Activated T-helper 1 cell treated with anti-CD3 and anti-CD28 coated beads, Interleukin-12 subunit alpha, Interleukin-12 subunit beta, Interleukin-2, Interleukin-4 antibody, amounts not matched to agents 30 ng/mL and 10 ng/mL and 1 ng/mL, durations not matched to agents 14 hours and 24 hours and 36 hours (primary cell): ENCODE measurements at regions of chr11 and their contacts with region 1.

Region 1: DNA sequence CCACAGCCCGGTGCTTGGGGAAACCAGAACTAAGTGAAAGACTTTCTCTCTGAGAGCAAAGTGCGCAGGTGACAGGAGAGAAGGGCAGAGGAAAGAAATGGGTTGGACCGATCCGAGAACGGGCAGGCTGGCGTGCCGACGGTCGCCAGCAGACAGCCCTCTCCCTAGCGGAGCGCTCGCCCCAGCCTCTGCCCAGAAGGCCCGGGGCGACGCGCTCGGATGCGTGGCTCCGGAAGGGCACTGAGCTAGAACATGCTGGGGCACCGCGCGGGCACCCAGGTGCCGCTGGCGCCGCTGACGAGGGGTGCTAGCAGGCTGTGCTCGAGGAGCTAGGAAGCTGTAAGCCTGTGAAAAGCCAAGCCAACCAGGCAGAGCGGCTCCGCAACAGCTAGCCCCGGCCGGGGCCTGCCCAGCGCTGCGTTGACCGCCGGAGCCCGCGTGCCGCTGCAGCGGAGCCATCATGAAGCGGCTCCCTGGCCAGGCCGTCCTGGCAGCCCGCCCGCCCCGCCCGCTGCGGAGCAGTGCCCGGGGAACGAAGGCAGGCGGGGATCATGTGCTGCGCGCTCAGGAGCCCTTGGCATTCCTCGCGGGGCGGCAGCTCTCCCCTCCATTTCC is 22.1 kb upstream of the RRAS2 start:
- DNase-seq: peak; percentile 21
- H3K4me3 Mint-ChIP-seq: peak overlapping the region; percentile 74
- H3K27ac Mint-ChIP-seq: peak overlapping the region; percentile 13
- H3K4me1 Mint-ChIP-seq: peaks cover 19% of the 10 kb centered on the region
- H3K27me3 Mint-ChIP-seq: peaks cover 30% of the 10 kb centered on the region

Region 2: DNA sequence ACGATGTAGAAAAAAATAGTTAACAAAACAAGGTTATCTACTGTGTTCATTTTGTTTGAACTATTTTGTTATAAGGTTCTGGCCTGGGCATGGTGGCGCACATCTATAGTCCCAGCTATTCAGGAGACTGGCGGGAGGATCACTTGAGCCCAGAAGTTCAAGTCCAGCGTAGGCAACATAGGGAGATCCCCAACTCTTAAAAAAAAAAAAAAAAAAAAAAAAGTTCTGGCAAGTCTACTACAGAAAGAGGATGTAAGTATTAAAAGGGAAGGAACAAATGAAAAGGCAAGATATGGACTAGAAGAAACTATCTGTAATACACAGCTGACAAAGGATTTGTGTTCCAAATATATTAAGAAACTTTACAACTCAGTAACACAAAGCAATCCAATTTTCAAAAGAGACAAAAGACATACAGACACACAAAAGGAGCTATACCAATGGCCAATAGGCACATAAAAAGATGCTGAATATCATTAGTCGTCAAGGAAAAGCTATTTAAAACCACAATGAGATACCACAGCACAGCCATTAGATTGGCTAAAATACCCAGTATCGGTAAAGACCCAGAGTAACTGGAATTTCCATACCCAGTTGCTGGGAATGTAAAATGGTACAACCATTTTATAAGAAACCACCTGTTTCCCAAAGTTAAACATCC is 49.4 kb before region 1 on chr11:
- intact Hi-C with region 1: no loop called
- DNase-seq: no peak
- H3K4me3 Mint-ChIP-seq: no peak overlapping the region
- H3K27ac Mint-ChIP-seq: no peak overlapping the region
- H3K4me1 Mint-ChIP-seq: peaks cover 46% of the 10 kb centered on the region
- H3K27me3 Mint-ChIP-seq: no peaks in the 10 kb centered on the region

Region 3: GRCh38 chr11:14393889-14394288 is 12.8 kb after region 1 on chr11:
- intact Hi-C with region 1: loop called (anchors 2 kb)
- DNase-seq: no peak
- H3K4me3 Mint-ChIP-seq: no peak overlapping the region
- H3K27ac Mint-ChIP-seq: no peak overlapping the region
- H3K4me1 Mint-ChIP-seq: peaks cover 5% of the 10 kb centered on the region
- H3K27me3 Mint-ChIP-seq: peaks cover 19% of the 10 kb centered on the region